ENCODE measurements at regions of chr14 and their contacts with region 1.

Region 1: GRCh38 chr14:90970167-90970600 is 90.3 kb downstream of the RPS6KA5 start:
- DNase-seq: no peak
- H3K4me3 Mint-ChIP-seq: peak overlapping the region; percentile 74
- H3K27ac Mint-ChIP-seq: peak overlapping the region; percentile 90
- H3K4me1 Mint-ChIP-seq: peaks cover 38% of the 10 kb centered on the region
- H3K27me3 Mint-ChIP-seq: no peaks in the 10 kb centered on the region

Region 2: DNA sequence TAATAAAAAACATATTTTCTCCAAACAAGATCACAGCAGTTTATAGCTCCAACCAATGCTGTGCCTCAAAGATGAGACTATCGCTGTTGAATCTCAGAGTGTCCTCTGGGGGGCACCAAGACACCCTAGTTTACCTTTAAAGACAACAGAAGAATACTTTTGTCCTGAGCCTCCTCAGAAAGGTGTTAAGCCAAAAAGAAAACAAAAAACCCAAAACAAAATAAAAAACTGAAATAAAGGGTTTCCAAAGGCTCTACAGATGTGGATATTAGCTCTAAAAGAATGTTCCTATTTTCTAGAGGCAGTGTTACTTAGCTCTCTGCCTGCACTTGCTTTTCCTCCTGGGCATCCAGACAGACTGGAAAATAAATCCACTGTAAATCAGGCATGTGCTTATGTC is 67.1 kb before region 1 on chr14:
- intact Hi-C with region 1: loop called (anchors 1 kb)
- DNase-seq: peak; percentile 89
- H3K4me3 Mint-ChIP-seq: no peak overlapping the region
- H3K27ac Mint-ChIP-seq: no peak overlapping the region
- H3K4me1 Mint-ChIP-seq: peaks cover 30% of the 10 kb centered on the region
- H3K27me3 Mint-ChIP-seq: no peaks in the 10 kb centered on the region

Region 3: DNA sequence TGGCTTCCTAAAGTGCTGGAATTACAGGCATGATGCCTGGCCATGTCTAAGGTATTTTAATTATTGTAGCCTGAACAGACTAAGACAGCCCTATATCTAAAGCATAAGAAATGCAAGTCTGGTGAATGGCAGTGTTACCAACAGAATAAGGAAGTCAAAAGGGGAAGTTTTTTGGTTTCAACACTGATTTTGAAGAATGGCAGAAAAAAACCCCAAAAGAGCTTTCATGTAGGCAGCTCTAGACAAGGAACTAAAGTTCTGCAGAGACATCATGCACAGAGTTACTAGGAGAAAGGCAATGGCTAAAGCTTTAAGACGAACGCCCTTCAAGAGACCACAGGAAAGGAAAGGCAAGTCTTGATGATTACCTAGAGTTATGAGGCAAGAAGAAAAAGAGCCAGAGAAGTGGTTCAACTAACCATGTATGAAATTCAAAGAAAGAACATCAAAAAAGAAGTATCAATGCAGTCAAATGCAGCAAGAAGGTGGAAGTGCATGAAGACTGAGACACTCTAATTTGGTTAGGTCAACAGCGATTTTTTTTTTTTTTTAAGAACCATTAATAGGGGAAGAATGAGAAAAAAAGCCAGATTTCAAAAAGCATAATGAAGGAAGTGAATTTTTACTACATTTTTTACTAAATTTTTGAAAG is 39.4 kb after region 1 on chr14:
- intact Hi-C with region 1: loop called (anchors 1 kb)
- DNase-seq: peak; percentile 76
- H3K4me3 Mint-ChIP-seq: peak overlapping the region; percentile 55
- H3K27ac Mint-ChIP-seq: peak overlapping the region; percentile 74
- H3K4me1 Mint-ChIP-seq: peaks cover 38% of the 10 kb centered on the region
- H3K27me3 Mint-ChIP-seq: no peaks in the 10 kb centered on the region

Region 4: GRCh38 chr14:91038438-91038837 is 68.3 kb after region 1 on chr14:
- intact Hi-C with region 1: loop called (anchors 5 kb)
- DNase-seq: no peak
- H3K4me3 Mint-ChIP-seq: no peak overlapping the region
- H3K27ac Mint-ChIP-seq: peak overlapping the region; percentile 8
- H3K4me1 Mint-ChIP-seq: peaks cover 60% of the 10 kb centered on the region
- H3K27me3 Mint-ChIP-seq: no peaks in the 10 kb centered on the region

Region 5: GRCh38 chr14:91114079-91115065 is 144.2 kb after region 1 on chr14:
- intact Hi-C with region 1: loop called (anchors 1 kb)
- DNase-seq: peak; percentile 93
- H3K4me3 Mint-ChIP-seq: peak overlapping the region; percentile 93
- H3K27ac Mint-ChIP-seq: peak overlapping the region; percentile 97
- H3K4me1 Mint-ChIP-seq: peaks cover 61% of the 10 kb centered on the region
- H3K27me3 Mint-ChIP-seq: no peaks in the 10 kb centered on the region

Measured in activated CD4-positive, alpha-beta T cell treated with anti-CD3 and anti-CD28 coated beads, Interleukin-2, amount 10 ng/mL, durations not matched to agents 24 days and 14 days (primary cell).